MCF 10A (cell line): ENCODE measurements at regions of chr6 and their contacts with region 1.

Region 1: GRCh38 chr6:7541175-7542064 is at the start of gene DSP:
- DNase-seq: peak; percentile 86
- H3K4me3 Mint-ChIP-seq: peak within 1 kb of the TSS; percentile 98
- H3K27ac Mint-ChIP-seq: peak within 1 kb of the TSS; percentile 97
- H3K4me1 Mint-ChIP-seq: peaks cover 13% of the 10 kb centered on the region
- H3K27me3 Mint-ChIP-seq: no peaks in the 10 kb centered on the region
- CTCF ChIP-seq: no peak
- total RNA-seq, gene DSP: 163 and 227 TPM in 2 replicates

Region 2: GRCh38 chr6:7389451-7390225 is 151.8 kb before region 1 on chr6 and contains the starts of genes CAGE1 and RIOK1:
- CTCF ChIA-PET with region 1: no interaction called
- POLR2A ChIA-PET with region 1: interaction called, 23 read pairs
- intact Hi-C with region 1: loop called (anchors 1 kb)
- DNase-seq: peak; percentile 98
- H3K4me3 Mint-ChIP-seq: peak within 1 kb of the TSS; percentile 77
- H3K27ac Mint-ChIP-seq: peak within 1 kb of the TSS; percentile 87
- H3K4me1 Mint-ChIP-seq: peaks cover 38% of the 10 kb centered on the region
- H3K27me3 Mint-ChIP-seq: no peaks in the 10 kb centered on the region
- CTCF ChIP-seq: no peak
- total RNA-seq, gene CAGE1: 0.33 and 0.47 TPM in 2 replicates
- total RNA-seq, gene RIOK1: 34.2 and 40.9 TPM in 2 replicates

Region 3: GRCh38 chr6:7424967-7425807 is 116.2 kb before region 1 on chr6:
- CTCF ChIA-PET with region 1: interaction called, 9 read pairs
- POLR2A ChIA-PET with region 1: interaction called, 20 read pairs
- intact Hi-C with region 1: loop called (anchors 1 kb)
- DNase-seq: peak; percentile 80
- H3K4me3 Mint-ChIP-seq: no peak overlapping the region
- H3K27ac Mint-ChIP-seq: no peak overlapping the region
- H3K4me1 Mint-ChIP-seq: no peaks in the 10 kb centered on the region
- H3K27me3 Mint-ChIP-seq: no peaks in the 10 kb centered on the region
- CTCF ChIP-seq: peak; percentile 61

Region 4: DNA sequence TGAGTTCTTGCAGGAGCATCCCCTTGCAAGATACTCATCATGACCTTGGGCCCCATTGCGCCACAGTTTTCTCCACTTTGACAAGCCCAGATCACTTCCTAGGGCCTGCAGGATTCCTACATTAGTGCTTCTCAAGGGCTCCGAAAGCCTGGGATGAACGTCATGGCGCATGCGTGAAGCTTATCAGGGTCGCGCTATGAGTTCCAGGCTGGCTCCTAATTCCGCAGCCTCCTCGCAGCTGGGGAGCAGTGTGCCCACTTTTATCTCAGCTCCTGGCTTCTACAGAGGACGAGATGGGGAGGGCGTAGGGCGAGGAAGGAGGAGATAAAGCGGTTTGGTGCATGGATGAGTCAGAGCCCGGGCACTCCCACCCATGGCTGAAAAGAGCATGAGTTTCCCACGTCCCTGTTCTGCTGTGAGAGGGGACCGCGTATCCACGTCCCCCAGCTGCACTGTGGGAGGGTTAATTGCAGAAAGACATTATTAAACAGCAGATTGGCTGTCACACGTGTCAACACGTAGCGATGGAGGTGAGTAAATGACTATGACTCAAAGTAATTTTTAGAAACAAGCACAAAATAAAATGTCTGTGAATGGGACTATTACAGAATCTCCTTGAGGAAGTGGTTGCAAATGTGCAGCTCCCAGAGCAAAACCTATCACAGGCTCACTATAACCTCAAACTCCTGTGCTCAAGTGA is 72.9 kb before region 1 on chr6:
- CTCF ChIA-PET with region 1: interaction called, 3 read pairs
- POLR2A ChIA-PET with region 1: interaction called, 20 read pairs
- intact Hi-C with region 1: loop called (anchors 5 kb)
- DNase-seq: peak; percentile 77
- H3K4me3 Mint-ChIP-seq: peak overlapping the region; percentile 72
- H3K27ac Mint-ChIP-seq: peak overlapping the region; percentile 83
- H3K4me1 Mint-ChIP-seq: peaks cover 30% of the 10 kb centered on the region
- H3K27me3 Mint-ChIP-seq: no peaks in the 10 kb centered on the region
- CTCF ChIP-seq: no peak

Region 5: GRCh38 chr6:7489376-7489775 is 52.0 kb before region 1 on chr6:
- CTCF ChIA-PET with region 1: no interaction called
- POLR2A ChIA-PET with region 1: interaction called, 10 read pairs
- intact Hi-C with region 1: no loop called
- DNase-seq: no peak
- H3K4me3 Mint-ChIP-seq: no peak overlapping the region
- H3K27ac Mint-ChIP-seq: no peak overlapping the region
- H3K4me1 Mint-ChIP-seq: peaks cover 11% of the 10 kb centered on the region
- H3K27me3 Mint-ChIP-seq: no peaks in the 10 kb centered on the region
- CTCF ChIP-seq: no peak

Region 6: DNA sequence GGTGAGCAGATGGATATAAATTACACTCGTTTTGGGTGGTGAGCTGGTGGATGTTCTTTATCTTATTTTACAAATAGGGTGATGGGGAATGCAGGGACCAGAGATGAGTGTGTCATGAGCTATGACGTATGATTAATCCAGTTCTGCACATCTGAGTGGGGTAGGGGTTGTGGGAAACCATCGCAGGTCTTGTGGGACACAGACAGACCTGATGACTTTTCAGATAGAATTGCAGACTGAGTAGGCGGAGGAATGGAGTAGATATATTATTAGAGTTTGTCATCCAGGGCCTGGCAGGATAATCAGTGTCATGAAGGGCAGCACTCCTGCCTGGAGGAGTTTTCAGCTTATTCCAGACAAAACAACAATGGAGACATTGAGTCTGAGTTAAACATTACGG is 12.9 kb before region 1 on chr6:
- CTCF ChIA-PET with region 1: interaction called, 5 read pairs
- POLR2A ChIA-PET with region 1: interaction called, 18 read pairs
- intact Hi-C with region 1: no loop called
- DNase-seq: no peak
- H3K4me3 Mint-ChIP-seq: no peak overlapping the region
- H3K27ac Mint-ChIP-seq: no peak overlapping the region
- H3K4me1 Mint-ChIP-seq: peaks cover 20% of the 10 kb centered on the region
- H3K27me3 Mint-ChIP-seq: no peaks in the 10 kb centered on the region
- CTCF ChIP-seq: no peak

Region 7: DNA sequence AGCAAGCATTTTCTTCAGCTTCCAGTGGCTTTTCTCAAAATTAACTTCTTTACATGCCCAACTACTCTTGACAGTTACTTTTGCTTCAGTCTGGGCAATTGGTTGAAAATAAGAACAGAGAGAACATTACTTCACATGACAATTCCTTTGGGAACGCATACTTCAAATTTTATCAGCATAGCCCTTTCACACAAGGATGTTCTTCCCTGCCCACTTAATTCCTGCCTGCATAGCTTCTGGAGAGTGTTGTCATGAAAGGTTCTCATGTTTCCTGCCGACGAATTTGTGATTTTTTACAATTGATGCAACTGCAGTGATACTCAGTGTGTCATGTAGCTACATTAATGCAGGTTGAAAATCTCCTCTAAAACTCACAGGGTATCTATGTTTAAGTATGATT is 26.6 kb after region 1 on chr6:
- CTCF ChIA-PET with region 1: no interaction called
- POLR2A ChIA-PET with region 1: interaction called, 165 read pairs
- intact Hi-C with region 1: no loop called
- DNase-seq: no peak
- H3K4me3 Mint-ChIP-seq: no peak overlapping the region
- H3K27ac Mint-ChIP-seq: no peak overlapping the region
- H3K4me1 Mint-ChIP-seq: no peaks in the 10 kb centered on the region
- H3K27me3 Mint-ChIP-seq: no peaks in the 10 kb centered on the region
- CTCF ChIP-seq: no peak